ENCODE measurements at regions of chr11 and their contacts with region 1.

Region 1: GRCh38 chr11:67353317-67354074 is at the start of gene POLD4:
- DNase-seq: peak; percentile 99
- H3K4me3 ChIP-seq: peak within 1 kb of the TSS; percentile 71 to 85 (median 76)
- H3K27ac ChIP-seq: peak within 1 kb of the TSS; percentile 95 to 100 (median 98)
- H3K4me1 ChIP-seq: peaks cover 3 to 74% (median 72%) of the 10 kb centered on the region in 4 donors
- H3K27me3 ChIP-seq: no peaks in the 10 kb centered on the region
- CTCF ChIP-seq: no peak
- EP300 ChIP-seq: no peak
- POLR2A ChIP-seq: peak; percentile 79 to 88
- total RNA-seq, gene POLD4: 48.5 to 78.9 (median 67.0) TPM

Region 2: GRCh38 chr11:67373925-67374618 is 20.6 kb after region 1 on chr11:
- intact Hi-C with region 1: loop called (anchors 1 kb)
- DNase-seq: peak; percentile 92
- H3K4me3 ChIP-seq: peak overlapping the region; percentile 55 to 78 (median 68)
- H3K27ac ChIP-seq: peak overlapping the region; percentile 85 to 100 (median 92)
- H3K4me1 ChIP-seq: peaks cover 0 to 64% (median 56%) of the 10 kb centered on the region in 4 donors
- H3K27me3 ChIP-seq: no peaks in the 10 kb centered on the region
- CTCF ChIP-seq: peak in 3 of 4 experiments; percentile 51 to 70 (median 66)
- EP300 ChIP-seq: peak in 1 of 4 donors; percentile 16
- POLR2A ChIP-seq: no peak

Region 3: DNA sequence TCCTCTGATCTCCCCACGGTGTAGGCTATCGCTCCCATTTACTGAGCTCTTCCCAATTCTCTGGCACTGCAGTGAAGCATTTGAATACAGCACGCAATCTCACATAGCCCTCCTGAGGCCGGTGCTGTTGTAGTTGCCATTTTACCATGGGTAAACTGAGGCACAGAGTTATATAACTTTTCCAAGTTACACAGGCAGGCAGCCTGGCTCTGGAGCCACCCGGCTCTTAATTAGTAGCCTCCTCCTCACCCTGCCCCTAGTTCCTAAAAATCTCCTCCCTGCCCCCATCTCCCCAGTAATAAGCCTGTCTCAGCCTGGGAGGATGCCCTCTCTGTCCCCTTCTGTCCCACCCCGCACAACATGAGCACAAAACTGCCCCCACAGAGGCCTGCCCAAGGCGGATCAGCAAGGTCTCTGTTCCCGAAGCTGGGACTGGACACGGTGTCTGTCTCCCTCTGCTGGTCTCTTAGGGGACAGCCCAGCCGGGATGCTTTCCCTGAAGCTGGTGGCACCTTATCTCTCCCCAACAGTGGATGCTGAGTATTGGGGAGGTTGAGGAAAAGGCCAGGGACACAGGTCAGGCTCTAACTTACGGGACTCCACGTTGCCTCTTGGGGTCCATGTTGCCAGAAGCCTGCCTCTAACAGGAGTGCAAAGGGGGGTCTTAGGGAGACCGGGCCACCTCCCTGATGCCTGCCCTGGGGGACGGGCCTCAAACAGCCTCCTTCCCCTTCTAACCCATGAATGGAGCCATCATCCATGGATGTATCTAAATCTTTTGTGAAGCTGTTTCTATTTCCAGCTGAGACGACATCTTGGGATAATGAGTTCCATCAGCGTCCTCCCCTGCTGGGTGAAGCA is 29.0 kb after region 1 on chr11:
- intact Hi-C with region 1: loop called (anchors 1 kb)
- DNase-seq: peak; percentile 90
- H3K4me3 ChIP-seq: no peak overlapping the region
- H3K27ac ChIP-seq: no peak overlapping the region
- H3K4me1 ChIP-seq: peaks cover 0 to 18% (median 13%) of the 10 kb centered on the region in 4 donors
- H3K27me3 ChIP-seq: no peaks in the 10 kb centered on the region
- CTCF ChIP-seq: peak; percentile 98 to 99 (median 98)
- EP300 ChIP-seq: no peak
- POLR2A ChIP-seq: no peak

Region 4: DNA sequence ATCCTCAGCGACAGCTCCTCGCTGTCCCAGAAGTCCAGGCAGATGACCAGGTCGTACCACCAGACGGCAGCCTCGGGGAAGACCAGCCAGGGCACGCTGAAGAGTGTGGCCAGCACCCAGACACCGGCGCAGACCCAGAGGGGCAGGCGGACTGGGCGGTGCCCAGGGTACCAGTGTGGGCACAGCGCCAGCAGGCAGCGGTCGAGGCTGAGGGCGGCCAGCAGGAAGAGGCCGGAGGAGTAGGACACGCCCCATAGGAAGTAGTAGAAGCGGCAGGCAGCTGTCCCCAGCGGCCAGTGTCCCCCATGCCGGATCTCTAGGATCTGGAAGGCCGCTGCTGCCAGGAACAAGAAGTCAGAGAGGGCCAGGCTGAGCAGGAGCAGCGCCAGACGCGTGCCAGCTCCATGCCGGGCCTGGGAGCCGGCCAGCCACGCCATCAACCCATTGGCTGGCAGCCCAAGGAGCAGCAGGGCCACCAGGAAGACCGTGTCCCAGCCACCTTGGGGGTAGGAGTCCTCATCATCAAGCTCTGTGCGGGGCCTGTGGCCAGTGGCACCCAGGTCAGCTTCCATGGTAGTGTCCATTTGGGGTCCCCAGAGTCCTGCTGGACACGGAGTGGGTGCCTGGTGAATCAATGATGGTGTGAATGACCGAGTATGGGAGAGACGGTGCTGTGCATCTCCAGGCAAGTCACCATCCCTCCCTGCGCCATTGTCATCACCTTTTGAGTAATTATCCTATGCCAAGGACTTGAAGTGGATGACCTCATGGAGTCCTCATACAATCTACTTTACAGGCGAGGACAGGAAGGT is 98.9 kb after region 1 on chr11 and contains the start of gene GPR152:
- intact Hi-C with region 1: no loop called
- DNase-seq: no peak
- H3K4me3 ChIP-seq: no peak within 1 kb of the TSS
- H3K27ac ChIP-seq: peak within 1 kb of the TSS in 1 of 4 donors; percentile 29
- H3K4me1 ChIP-seq: no peaks in the 10 kb centered on the region
- H3K27me3 ChIP-seq: no peaks in the 10 kb centered on the region
- CTCF ChIP-seq: no peak
- EP300 ChIP-seq: no peak
- POLR2A ChIP-seq: no peak
- total RNA-seq, gene GPR152: not detected

Measured in sigmoid colon (tissue), 7 donors.